Activated T-helper 1 cell treated with anti-CD3 and anti-CD28 coated beads, Interleukin-12 subunit alpha, Interleukin-12 subunit beta, Interleukin-2, Interleukin-4 antibody, amounts not matched to agents 30 ng/mL and 10 ng/mL and 1 ng/mL, durations not matched to agents 14 hours and 24 hours and 36 hours (primary cell): ENCODE measurements at regions of chr14 and their contacts with region 1.

Region 1: GRCh38 chr14:90970167-90970600 is 90.3 kb downstream of the RPS6KA5 start:
- DNase-seq: no peak
- H3K4me3 Mint-ChIP-seq: peak overlapping the region; percentile 71
- H3K27ac Mint-ChIP-seq: peak overlapping the region; percentile 90
- H3K4me1 Mint-ChIP-seq: peaks cover 50% of the 10 kb centered on the region
- H3K27me3 Mint-ChIP-seq: no peaks in the 10 kb centered on the region

Region 2: GRCh38 chr14:90753456-90754005 is 216.7 kb before region 1 on chr14:
- intact Hi-C with region 1: no loop called
- DNase-seq: no peak
- H3K4me3 Mint-ChIP-seq: no peak overlapping the region
- H3K27ac Mint-ChIP-seq: no peak overlapping the region
- H3K4me1 Mint-ChIP-seq: peaks cover 6% of the 10 kb centered on the region
- H3K27me3 Mint-ChIP-seq: peaks cover 19% of the 10 kb centered on the region

Region 3: GRCh38 chr14:90903101-90903500 is 67.1 kb before region 1 on chr14:
- intact Hi-C with region 1: loop called (anchors 1 kb)
- DNase-seq: peak; percentile 33
- H3K4me3 Mint-ChIP-seq: no peak overlapping the region
- H3K27ac Mint-ChIP-seq: no peak overlapping the region
- H3K4me1 Mint-ChIP-seq: peaks cover 35% of the 10 kb centered on the region
- H3K27me3 Mint-ChIP-seq: no peaks in the 10 kb centered on the region

Region 4: GRCh38 chr14:91009501-91010152 is 39.4 kb after region 1 on chr14:
- intact Hi-C with region 1: loop called (anchors 2 kb)
- DNase-seq: peak; percentile 11
- H3K4me3 Mint-ChIP-seq: peak overlapping the region; percentile 42
- H3K27ac Mint-ChIP-seq: peak overlapping the region; percentile 70
- H3K4me1 Mint-ChIP-seq: peaks cover 46% of the 10 kb centered on the region
- H3K27me3 Mint-ChIP-seq: no peaks in the 10 kb centered on the region

Region 5: DNA sequence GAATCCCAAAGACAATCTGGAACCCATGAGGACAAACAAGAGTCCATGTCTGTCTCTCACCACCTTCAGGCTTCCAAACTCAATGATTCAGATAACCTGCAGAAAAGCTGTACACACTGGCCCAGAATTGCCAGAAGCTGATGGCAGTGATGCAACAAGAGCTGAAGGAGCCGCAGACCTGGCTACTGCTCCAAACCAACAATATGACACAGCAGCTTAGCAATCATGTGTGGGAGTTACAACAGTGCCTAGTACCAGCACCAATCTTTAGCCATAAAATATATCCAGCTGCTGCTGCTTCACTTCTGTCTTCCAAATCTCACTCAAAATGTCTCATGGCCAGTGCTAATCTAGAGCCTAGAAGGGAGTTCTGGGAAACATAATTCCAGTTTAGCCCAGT is 68.3 kb after region 1 on chr14:
- intact Hi-C with region 1: loop called (anchors 1 kb)
- DNase-seq: no peak
- H3K4me3 Mint-ChIP-seq: no peak overlapping the region
- H3K27ac Mint-ChIP-seq: no peak overlapping the region
- H3K4me1 Mint-ChIP-seq: peaks cover 73% of the 10 kb centered on the region
- H3K27me3 Mint-ChIP-seq: no peaks in the 10 kb centered on the region

Region 6: DNA sequence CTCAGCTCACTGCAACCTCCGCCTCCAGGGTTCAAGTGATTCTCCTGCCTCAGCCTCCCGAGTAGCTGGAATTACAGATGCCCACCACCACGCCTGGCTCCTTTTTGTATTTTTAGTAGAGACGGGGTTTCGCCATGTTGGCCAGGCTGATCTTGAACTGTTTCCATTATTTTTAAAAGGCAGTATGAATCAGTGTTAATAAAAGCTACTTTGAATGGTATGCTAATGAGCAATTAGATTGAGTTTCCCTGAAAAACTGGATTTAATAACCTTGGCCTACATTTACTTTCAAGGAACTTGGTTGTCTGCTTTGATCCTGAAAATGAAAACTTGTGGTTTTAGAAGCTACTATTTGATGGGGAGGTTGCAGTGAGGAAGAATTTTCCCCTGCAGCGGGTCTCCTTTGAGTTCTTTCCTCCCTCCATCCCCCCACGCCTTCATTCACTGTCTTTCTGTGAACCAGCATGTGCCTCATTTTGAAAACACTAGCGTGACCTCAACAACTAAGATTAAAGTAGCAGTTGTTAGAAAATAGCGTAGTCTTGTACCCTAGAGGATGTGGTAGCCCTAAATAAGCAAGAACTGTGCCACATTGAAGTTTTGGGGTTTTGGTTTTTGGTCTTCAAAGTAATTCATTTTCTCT is 108.0 kb after region 1 on chr14:
- intact Hi-C with region 1: loop called (anchors 1 kb)
- DNase-seq: peak; percentile 68
- H3K4me3 Mint-ChIP-seq: peak overlapping the region; percentile 51
- H3K27ac Mint-ChIP-seq: peak overlapping the region; percentile 85
- H3K4me1 Mint-ChIP-seq: peaks cover 63% of the 10 kb centered on the region
- H3K27me3 Mint-ChIP-seq: peaks cover 6% of the 10 kb centered on the region

Region 7: GRCh38 chr14:91244501-91244901 is 274.3 kb after region 1 on chr14 and contains the start of gene GPR68:
- intact Hi-C with region 1: loop called (anchors 1 kb)
- DNase-seq: no peak
- H3K4me3 Mint-ChIP-seq: peak within 1 kb of the TSS; percentile 85
- H3K27ac Mint-ChIP-seq: peak within 1 kb of the TSS; percentile 88
- H3K4me1 Mint-ChIP-seq: peaks cover 89% of the 10 kb centered on the region
- H3K27me3 Mint-ChIP-seq: no peaks in the 10 kb centered on the region
- total RNA-seq, gene GPR68: 4.5 and 5.4 TPM in 2 replicates

Region 8: DNA sequence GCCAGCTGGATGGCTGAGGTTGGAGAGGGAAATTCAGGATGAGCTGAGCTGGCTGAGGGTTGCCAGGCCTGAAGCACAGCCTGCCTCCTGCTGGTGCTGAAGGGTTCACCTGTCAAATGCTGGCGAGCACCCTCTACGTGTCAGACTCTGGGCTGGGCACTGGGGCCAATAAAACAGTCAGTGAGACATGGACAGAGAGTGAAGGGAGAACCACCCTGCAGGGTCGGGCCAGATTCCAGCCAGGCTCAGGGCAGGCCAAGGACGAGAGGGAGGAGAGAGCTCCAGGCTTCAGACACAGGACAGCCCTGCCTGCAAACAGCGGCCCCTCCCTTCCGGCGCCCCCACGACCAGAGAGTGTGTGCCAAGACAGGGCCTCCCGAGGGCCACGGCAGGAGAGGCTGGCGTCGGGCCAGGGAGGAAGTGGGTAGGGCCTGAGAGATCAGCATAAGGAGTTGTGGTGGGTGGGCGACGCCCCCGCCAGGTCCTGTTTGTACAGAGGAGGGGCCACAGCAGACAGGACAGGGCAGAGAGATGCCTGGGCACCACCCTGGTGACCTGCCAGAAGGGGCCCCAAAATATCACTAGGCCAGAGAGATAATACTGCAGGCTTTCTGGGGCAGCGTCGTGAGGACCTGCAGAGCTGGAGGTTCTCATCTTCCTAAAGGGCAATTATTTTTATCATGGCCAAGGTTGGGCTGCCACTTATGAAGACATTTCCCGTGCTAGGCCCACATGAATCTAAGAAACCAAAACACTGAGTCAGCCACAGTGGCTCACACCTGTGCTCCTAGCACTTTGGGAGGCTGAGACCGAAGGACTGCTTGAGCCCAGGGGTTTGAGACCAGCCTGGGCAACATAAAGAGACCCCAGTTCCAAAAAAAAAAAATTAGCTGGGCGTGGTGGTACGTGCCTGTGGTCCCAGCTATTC is 347.5 kb after region 1 on chr14:
- intact Hi-C with region 1: loop called (anchors 1 kb)
- DNase-seq: peak; percentile 66
- H3K4me3 Mint-ChIP-seq: peak overlapping the region; percentile 75
- H3K27ac Mint-ChIP-seq: peak overlapping the region; percentile 96
- H3K4me1 Mint-ChIP-seq: peaks cover 68% of the 10 kb centered on the region
- H3K27me3 Mint-ChIP-seq: no peaks in the 10 kb centered on the region